GM12878 (cell line): ENCODE measurements at regions of chr13 and their contacts with region 1.

Region 1: GRCh38 chr13:95301183-95301967 is at the start of gene ABCC4:
- DNase-seq: no peak
- ATAC-seq: peak; percentile 86
- H3K4me3 ChIP-seq: peak within 1 kb of the TSS; percentile 94
- H3K27ac ChIP-seq: peak within 1 kb of the TSS; percentile 89
- H3K4me1 ChIP-seq: peaks cover 14% of the 10 kb centered on the region
- H3K27me3 ChIP-seq: no peaks in the 10 kb centered on the region
- CTCF ChIP-seq: no peak; a peak in 1 of 6 replicates
- EP300 ChIP-seq: no peak
- POLR2A ChIP-seq: peak; percentile 88
- RAD21 ChIP-seq: 0 out of 2 replicates have a peak, but pooled peaks have one; percentile 1
- polyA plus RNA-seq, gene ABCC4: 7.2 to 8.0 TPM

Region 2: GRCh38 chr13:95226932-95227695 is 74.3 kb before region 1 on chr13:
- CTCF ChIA-PET with region 1: interaction called, 107 read pairs
- POLR2A ChIA-PET with region 1: interaction called, 54 read pairs
- RAD21 ChIA-PET with region 1: interaction called, 79 read pairs
- SMC1A ChIA-PET with region 1: interaction called, 129 read pairs
- in situ Hi-C with region 1: no loop called
- intact Hi-C with region 1: loop called (anchors 1 kb)
- DNase-seq: peak; percentile 88
- ATAC-seq: peak; percentile 88
- H3K4me3 ChIP-seq: peak overlapping the region; percentile 49; the same call in 1 of the 2 replicates
- H3K27ac ChIP-seq: peak overlapping the region; percentile 98
- H3K4me1 ChIP-seq: peaks cover 37% of the 10 kb centered on the region
- H3K27me3 ChIP-seq: no peaks in the 10 kb centered on the region
- CTCF ChIP-seq: no peak
- EP300 ChIP-seq: peak; percentile 51 to 57
- POLR2A ChIP-seq: no peak
- RAD21 ChIP-seq: no peak

Region 3: GRCh38 chr13:95239283-95239682 is 62.1 kb before region 1 on chr13:
- CTCF ChIA-PET with region 1: interaction called, 14 read pairs
- POLR2A ChIA-PET with region 1: interaction called, 3 read pairs
- RAD21 ChIA-PET with region 1: interaction called, 7 read pairs
- SMC1A ChIA-PET with region 1: interaction called, 7 read pairs
- in situ Hi-C with region 1: no loop called
- intact Hi-C with region 1: no loop called
- DNase-seq: no peak
- ATAC-seq: peak; percentile 78
- H3K4me3 ChIP-seq: 0 out of 2 replicates have a peak overlapping the region, but pooled peaks have one; percentile 16
- H3K27ac ChIP-seq: peak overlapping the region; percentile 4
- H3K4me1 ChIP-seq: peaks cover 32% of the 10 kb centered on the region
- H3K27me3 ChIP-seq: no peaks in the 10 kb centered on the region
- CTCF ChIP-seq: no peak
- EP300 ChIP-seq: no peak
- POLR2A ChIP-seq: no peak
- RAD21 ChIP-seq: no peak

Region 4: GRCh38 chr13:95261956-95262355 is 39.4 kb before region 1 on chr13:
- CTCF ChIA-PET with region 1: interaction called, 10 read pairs
- POLR2A ChIA-PET with region 1: interaction called, 37 read pairs
- RAD21 ChIA-PET with region 1: interaction called, 54 read pairs
- SMC1A ChIA-PET with region 1: interaction called, 24 read pairs
- in situ Hi-C with region 1: no loop called
- intact Hi-C with region 1: loop called (anchors 2 kb)
- DNase-seq: no peak
- ATAC-seq: no peak
- H3K4me3 ChIP-seq: no peak overlapping the region
- H3K27ac ChIP-seq: peak overlapping the region; percentile 91
- H3K4me1 ChIP-seq: peaks cover 56% of the 10 kb centered on the region
- H3K27me3 ChIP-seq: no peaks in the 10 kb centered on the region
- CTCF ChIP-seq: no peak
- EP300 ChIP-seq: no peak
- POLR2A ChIP-seq: no peak
- RAD21 ChIP-seq: no peak

Region 5: DNA sequence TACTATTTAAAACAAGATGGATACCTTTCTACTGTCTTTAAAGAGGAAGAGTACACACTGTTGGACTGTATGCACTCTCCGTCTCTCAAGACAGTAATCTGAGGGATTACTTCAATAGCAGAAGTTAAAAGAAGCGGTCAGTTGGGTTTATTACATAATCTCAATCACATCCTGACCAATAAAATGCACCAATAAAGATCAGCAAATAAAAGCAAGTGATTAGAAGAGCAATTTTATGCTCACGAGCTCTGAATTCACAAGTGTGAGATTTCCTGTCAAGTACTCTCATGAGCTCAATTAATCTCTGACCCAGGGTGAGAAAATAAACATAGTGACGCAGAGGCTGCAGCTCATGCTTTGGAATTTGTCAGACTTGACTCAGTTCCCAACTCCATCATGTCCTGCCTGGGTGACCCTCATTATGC is 12.3 kb before region 1 on chr13:
- CTCF ChIA-PET with region 1: interaction called, 20 read pairs
- POLR2A ChIA-PET with region 1: interaction called, 11 read pairs
- RAD21 ChIA-PET with region 1: interaction called, 13 read pairs
- SMC1A ChIA-PET with region 1: interaction called, 19 read pairs
- in situ Hi-C with region 1: no loop called
- intact Hi-C with region 1: no loop called
- DNase-seq: no peak
- ATAC-seq: no peak
- H3K4me3 ChIP-seq: no peak overlapping the region
- H3K27ac ChIP-seq: no peak overlapping the region
- H3K4me1 ChIP-seq: peaks cover 17% of the 10 kb centered on the region
- H3K27me3 ChIP-seq: no peaks in the 10 kb centered on the region
- CTCF ChIP-seq: no peak
- EP300 ChIP-seq: no peak
- POLR2A ChIP-seq: no peak
- RAD21 ChIP-seq: no peak

Region 6: DNA sequence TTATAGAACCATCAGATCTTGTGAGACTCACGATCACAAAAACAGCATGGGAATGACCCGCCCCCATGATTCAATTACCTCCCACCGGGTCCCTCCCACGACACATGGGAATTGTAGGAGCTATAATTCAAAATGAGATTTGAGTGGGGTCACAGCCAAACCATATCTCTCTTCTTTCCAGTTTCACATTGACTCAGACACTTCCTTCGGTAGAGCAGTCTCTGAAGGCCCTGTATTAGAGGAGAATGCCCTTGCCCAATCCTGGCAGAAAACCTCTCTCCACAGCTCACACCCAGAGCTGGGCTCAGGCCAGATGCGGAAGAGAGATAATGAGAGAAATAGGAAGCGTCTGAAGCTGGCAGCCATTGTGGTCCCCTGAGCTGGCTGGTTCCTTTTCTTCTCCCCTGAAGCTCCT is 178.8 kb after region 1 on chr13:
- CTCF ChIA-PET with region 1: interaction called, 4 read pairs
- POLR2A ChIA-PET with region 1: no interaction called
- RAD21 ChIA-PET with region 1: interaction called, 5 read pairs
- SMC1A ChIA-PET with region 1: no interaction called
- in situ Hi-C with region 1: no loop called
- intact Hi-C with region 1: loop called (anchors 5 kb)
- DNase-seq: peak; percentile 71
- ATAC-seq: peak; percentile 75
- H3K4me3 ChIP-seq: no peak overlapping the region
- H3K27ac ChIP-seq: peak overlapping the region; percentile 54
- H3K4me1 ChIP-seq: peaks cover 21% of the 10 kb centered on the region
- H3K27me3 ChIP-seq: no peaks in the 10 kb centered on the region
- CTCF ChIP-seq: no peak
- EP300 ChIP-seq: no peak
- POLR2A ChIP-seq: no peak
- RAD21 ChIP-seq: no peak